ENCODE measurements at regions of chr12 and their contacts with region 1.

Region 1: DNA sequence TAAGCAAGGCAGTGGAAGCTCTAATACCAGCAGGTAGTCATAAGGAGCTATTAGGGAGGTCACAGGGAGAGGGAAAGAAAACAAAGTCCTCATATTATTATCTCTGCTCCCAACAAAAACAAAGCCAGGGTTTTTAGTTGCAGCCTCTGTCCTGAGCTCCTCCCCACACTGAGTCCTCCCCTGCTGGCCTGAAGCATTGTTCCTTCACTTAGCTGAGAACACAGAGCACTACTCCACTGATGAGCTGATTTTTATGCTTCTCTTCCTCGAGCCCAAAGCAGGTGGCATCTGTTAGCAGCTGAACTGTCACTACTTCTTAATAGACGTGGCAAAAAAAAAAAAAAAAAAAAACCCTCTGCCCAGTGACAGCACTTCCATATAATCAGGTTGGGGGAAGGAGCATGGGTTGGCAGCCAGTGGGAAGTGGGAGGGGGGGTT is 10.5 kb upstream of the STAC3 start:
- DNase-seq: no peak
- ATAC-seq: no peak
- H3K4me3 ChIP-seq: no peak overlapping the region
- H3K27ac ChIP-seq: no peak overlapping the region
- H3K4me1 ChIP-seq: no peaks in the 10 kb centered on the region
- H3K27me3 ChIP-seq: no peaks in the 10 kb centered on the region
- CTCF ChIP-seq: no peak

Region 2: GRCh38 chr12:57250541-57251324 is 10.7 kb before region 1 on chr12 and contains the start of gene STAC3:
- CTCF ChIA-PET with region 1: no interaction called
- POLR2A ChIA-PET with region 1: no interaction called
- in situ Hi-C with region 1: no loop called
- intact Hi-C with region 1: no loop called
- DNase-seq: no peak
- ATAC-seq: no peak
- H3K4me3 ChIP-seq: no peak within 1 kb of the TSS
- H3K27ac ChIP-seq: no peak within 1 kb of the TSS
- H3K4me1 ChIP-seq: no peaks in the 10 kb centered on the region
- H3K27me3 ChIP-seq: no peaks in the 10 kb centered on the region
- CTCF ChIP-seq: no peak
- total RNA-seq, gene STAC3: 0.87 TPM

Region 3: DNA sequence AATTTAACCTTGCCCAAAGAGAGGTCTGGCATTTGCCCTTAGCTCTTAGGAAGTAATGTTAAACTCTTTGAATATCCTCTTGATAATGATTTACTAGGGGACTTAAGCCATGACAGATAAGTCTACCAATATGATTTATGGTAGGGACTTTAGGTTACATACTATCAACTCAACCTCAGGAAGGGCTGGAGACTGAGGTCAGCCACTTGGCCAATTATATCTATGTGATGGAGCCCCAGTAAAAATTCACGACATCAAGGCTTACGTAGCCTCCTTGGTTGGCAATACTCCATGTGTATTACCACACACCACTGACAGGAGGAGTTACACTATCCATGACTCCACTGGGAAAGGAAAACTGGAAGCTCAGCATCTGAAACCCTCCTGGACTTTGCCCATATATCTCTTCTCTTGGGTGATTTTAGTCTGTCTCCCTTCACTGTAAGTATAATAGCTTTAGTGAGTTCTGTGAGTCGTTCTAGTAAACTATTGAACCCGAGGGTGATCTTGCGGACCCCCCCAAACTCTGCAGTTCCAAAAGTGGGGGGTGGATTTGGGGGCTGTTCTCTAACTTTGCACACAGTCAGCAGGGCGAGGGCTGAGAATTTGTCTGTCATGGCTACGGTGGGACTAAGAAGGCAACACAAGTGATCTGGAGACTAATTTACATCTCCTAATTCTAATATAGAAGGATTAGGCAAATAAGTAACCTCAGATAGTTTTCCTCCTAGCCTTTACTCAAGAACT is 107.1 kb after region 1 on chr12:
- CTCF ChIA-PET with region 1: no interaction called
- POLR2A ChIA-PET with region 1: no interaction called
- in situ Hi-C with region 1: no loop called
- intact Hi-C with region 1: no loop called
- DNase-seq: no peak
- ATAC-seq: no peak
- H3K4me3 ChIP-seq: no peak overlapping the region
- H3K27ac ChIP-seq: no peak overlapping the region
- H3K4me1 ChIP-seq: no peaks in the 10 kb centered on the region
- H3K27me3 ChIP-seq: no peaks in the 10 kb centered on the region
- CTCF ChIP-seq: no peak

Region 4: GRCh38 chr12:57452937-57453509 is 191.6 kb after region 1 on chr12:
- CTCF ChIA-PET with region 1: interaction called, 11 read pairs
- POLR2A ChIA-PET with region 1: interaction called, 3 read pairs
- in situ Hi-C with region 1: no loop called
- intact Hi-C with region 1: loop called (anchors 5 kb)
- DNase-seq: no peak
- ATAC-seq: peak; percentile 86
- H3K4me3 ChIP-seq: no peak overlapping the region
- H3K27ac ChIP-seq: no peak overlapping the region
- H3K4me1 ChIP-seq: no peaks in the 10 kb centered on the region
- H3K27me3 ChIP-seq: no peaks in the 10 kb centered on the region
- CTCF ChIP-seq: peak; percentile 96

Measured in Panc1 (cell line).